T-cell (primary cell): ENCODE measurements at regions of chr6 and their contacts with region 1.

Region 1: GRCh38 chr6:95636552-95637431 is 59.5 kb downstream of the MANEA start:
- DNase-seq: no peak
- ATAC-seq: no peak
- H3K4me3 ChIP-seq: no peak overlapping the region
- H3K4me3 Mint-ChIP-seq: no peak overlapping the region
- H3K27ac ChIP-seq: no peak overlapping the region
- H3K27ac Mint-ChIP-seq: no peak overlapping the region
- H3K4me1 ChIP-seq: no peaks in the 10 kb centered on the region
- H3K4me1 Mint-ChIP-seq: no peaks in the 10 kb centered on the region
- H3K27me3 ChIP-seq: peaks cover 0 to 14% of the 10 kb centered on the region in 2 experiments
- H3K27me3 Mint-ChIP-seq: peaks cover 0 to 5% of the 10 kb centered on the region in 2 donors

Region 2: DNA sequence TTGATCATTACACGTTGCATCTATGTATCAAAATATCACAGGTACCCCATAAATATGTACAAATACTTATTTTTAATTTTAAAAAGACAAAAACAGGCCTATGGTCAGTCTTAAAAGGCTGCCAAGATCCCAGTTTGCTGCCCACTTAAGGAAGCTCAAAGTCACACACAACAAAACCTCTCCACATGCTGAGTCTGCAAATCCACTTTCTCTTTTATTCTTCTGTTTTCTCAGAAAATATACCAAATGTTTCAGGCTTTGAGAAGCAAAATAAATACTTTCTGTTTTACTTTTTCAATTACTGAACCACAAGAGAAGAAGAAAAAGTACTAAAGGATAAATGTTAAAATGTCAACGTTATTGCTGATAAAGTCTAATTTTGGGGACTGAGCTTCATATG is 167.3 kb before region 1 on chr6:
- CTCF ChIA-PET with region 1: no interaction called
- POLR2A ChIA-PET with region 1: no interaction called
- DNase-seq: no peak
- ATAC-seq: no peak
- H3K4me3 ChIP-seq: no peak overlapping the region
- H3K4me3 Mint-ChIP-seq: no peak overlapping the region
- H3K27ac ChIP-seq: no peak overlapping the region
- H3K27ac Mint-ChIP-seq: no peak overlapping the region
- H3K4me1 ChIP-seq: no peaks in the 10 kb centered on the region
- H3K4me1 Mint-ChIP-seq: no peaks in the 10 kb centered on the region
- H3K27me3 ChIP-seq: peaks cover 0 to 5% of the 10 kb centered on the region in 2 experiments
- H3K27me3 Mint-ChIP-seq: peaks cover 4 to 10% of the 10 kb centered on the region in 2 donors

Region 3: GRCh38 chr6:95587989-95588388 is 48.8 kb before region 1 on chr6:
- CTCF ChIA-PET with region 1: no interaction called
- POLR2A ChIA-PET with region 1: no interaction called
- DNase-seq: no peak
- ATAC-seq: no peak
- H3K4me3 ChIP-seq: no peak overlapping the region
- H3K4me3 Mint-ChIP-seq: peak overlapping the region in 1 of 3 donors; percentile 9
- H3K27ac ChIP-seq: no peak overlapping the region
- H3K27ac Mint-ChIP-seq: no peak overlapping the region
- H3K4me1 ChIP-seq: peaks cover 2 to 8% of the 10 kb centered on the region in 2 experiments
- H3K4me1 Mint-ChIP-seq: peaks cover 32 to 46% (median 38%) of the 10 kb centered on the region in 3 donors
- H3K27me3 ChIP-seq: no peaks in the 10 kb centered on the region
- H3K27me3 Mint-ChIP-seq: no peaks in the 10 kb centered on the region

Region 4: DNA sequence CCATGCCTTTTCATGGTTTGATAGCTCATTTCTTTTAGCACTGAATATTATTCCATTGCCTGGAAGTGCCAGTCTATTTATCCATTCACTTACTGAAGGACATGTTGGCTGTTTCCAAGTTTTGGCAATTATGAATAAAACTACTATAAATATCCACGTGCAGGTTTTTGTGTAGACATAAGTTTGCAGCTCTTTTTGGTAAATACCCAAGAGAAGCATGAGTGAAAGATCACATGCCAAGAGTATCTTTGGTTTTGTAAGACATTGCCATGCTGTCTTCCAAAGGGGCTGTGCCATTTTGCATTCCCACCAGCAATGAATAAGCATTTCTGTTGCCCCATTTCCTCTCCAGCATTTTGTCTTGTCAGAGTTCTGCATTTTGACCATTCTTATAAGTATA is 61.5 kb after region 1 on chr6:
- CTCF ChIA-PET with region 1: no interaction called
- POLR2A ChIA-PET with region 1: interaction called in 1 of 2 experiments, 10 read pairs
- DNase-seq: no peak
- ATAC-seq: no peak
- H3K4me3 ChIP-seq: no peak overlapping the region
- H3K4me3 Mint-ChIP-seq: no peak overlapping the region
- H3K27ac ChIP-seq: no peak overlapping the region
- H3K27ac Mint-ChIP-seq: no peak overlapping the region
- H3K4me1 ChIP-seq: no peaks in the 10 kb centered on the region
- H3K4me1 Mint-ChIP-seq: no peaks in the 10 kb centered on the region
- H3K27me3 ChIP-seq: peaks cover 0 to 4% of the 10 kb centered on the region in 2 experiments
- H3K27me3 Mint-ChIP-seq: peaks cover 0 to 4% of the 10 kb centered on the region in 2 donors

Region 5: GRCh38 chr6:95768539-95768938 is 131.7 kb after region 1 on chr6:
- CTCF ChIA-PET with region 1: no interaction called
- POLR2A ChIA-PET with region 1: no interaction called
- DNase-seq: no peak
- ATAC-seq: no peak
- H3K4me3 ChIP-seq: no peak overlapping the region
- H3K4me3 Mint-ChIP-seq: no peak overlapping the region
- H3K27ac ChIP-seq: no peak overlapping the region
- H3K27ac Mint-ChIP-seq: no peak overlapping the region
- H3K4me1 ChIP-seq: no peaks in the 10 kb centered on the region
- H3K4me1 Mint-ChIP-seq: no peaks in the 10 kb centered on the region
- H3K27me3 ChIP-seq: no peaks in the 10 kb centered on the region
- H3K27me3 Mint-ChIP-seq: no peaks in the 10 kb centered on the region

Region 6: DNA sequence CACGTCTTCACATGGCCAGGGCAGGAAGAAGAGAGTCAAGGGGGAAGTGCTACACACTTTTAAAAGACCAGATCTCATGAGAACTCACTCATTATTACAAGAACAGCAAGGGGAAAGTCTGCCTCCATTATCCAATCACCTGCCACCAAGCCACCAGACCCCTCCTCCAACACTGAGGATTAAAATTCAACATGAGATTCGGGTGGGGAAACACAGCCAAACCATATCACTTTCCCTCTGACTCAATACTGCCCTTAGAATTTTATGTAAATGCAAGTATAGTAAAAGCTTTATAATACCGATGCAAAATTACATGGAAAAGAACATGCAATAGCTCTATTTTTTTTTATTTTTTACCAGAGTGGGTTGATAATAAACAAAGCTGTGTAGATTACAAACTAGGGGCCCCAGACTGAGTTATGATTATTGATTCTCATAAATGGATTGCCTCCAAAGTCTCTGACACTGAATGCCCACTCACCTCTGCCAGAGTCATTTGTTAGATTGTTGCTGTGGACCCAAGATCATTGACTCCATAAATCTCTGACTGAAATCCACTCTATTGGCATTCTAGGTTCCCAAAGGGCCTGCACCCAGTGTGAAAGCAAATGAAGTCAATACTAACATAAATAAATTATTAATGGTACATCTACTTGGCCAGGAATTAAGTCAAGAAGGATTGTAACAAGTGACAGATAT is 194.2 kb after region 1 on chr6:
- CTCF ChIA-PET with region 1: no interaction called
- POLR2A ChIA-PET with region 1: no interaction called
- DNase-seq: no peak
- ATAC-seq: no peak
- H3K4me3 ChIP-seq: no peak overlapping the region
- H3K4me3 Mint-ChIP-seq: no peak overlapping the region
- H3K27ac ChIP-seq: no peak overlapping the region
- H3K27ac Mint-ChIP-seq: no peak overlapping the region
- H3K4me1 ChIP-seq: no peaks in the 10 kb centered on the region
- H3K4me1 Mint-ChIP-seq: no peaks in the 10 kb centered on the region
- H3K27me3 ChIP-seq: no peaks in the 10 kb centered on the region
- H3K27me3 Mint-ChIP-seq: no peaks in the 10 kb centered on the region